Sciatic nerve (tissue), 2 donors: ENCODE measurements at regions of chr20 and their contacts with region 1.

Region 1: GRCh38 chr20:54497926-54498718 is 22.7 kb downstream of the DOK5 start:
- DNase-seq: no peak
- ATAC-seq: no peak

Region 2: DNA sequence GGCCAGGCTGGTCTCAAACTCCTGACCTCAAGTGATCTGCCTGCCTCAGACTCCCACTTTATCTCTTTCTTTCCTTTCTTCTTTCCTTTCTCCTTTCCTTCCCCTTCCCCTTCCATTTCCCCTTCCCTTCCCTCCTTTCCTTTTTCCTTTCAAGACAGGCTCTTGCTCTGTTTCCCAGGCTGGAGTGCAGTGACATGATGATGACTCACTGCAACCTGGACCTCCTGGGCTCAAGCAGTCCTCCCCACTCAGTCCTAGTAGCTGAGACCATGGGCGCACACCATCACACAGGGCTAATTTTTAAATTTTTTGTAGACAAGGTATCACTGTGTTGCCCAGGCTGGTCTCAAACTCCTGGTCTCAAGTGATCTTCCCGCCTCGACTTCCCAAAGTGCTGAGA is 1928.9 kb before region 1 on chr20:
- intact Hi-C with region 1: no loop called
- DNase-seq: no peak
- ATAC-seq: no peak

Region 3: DNA sequence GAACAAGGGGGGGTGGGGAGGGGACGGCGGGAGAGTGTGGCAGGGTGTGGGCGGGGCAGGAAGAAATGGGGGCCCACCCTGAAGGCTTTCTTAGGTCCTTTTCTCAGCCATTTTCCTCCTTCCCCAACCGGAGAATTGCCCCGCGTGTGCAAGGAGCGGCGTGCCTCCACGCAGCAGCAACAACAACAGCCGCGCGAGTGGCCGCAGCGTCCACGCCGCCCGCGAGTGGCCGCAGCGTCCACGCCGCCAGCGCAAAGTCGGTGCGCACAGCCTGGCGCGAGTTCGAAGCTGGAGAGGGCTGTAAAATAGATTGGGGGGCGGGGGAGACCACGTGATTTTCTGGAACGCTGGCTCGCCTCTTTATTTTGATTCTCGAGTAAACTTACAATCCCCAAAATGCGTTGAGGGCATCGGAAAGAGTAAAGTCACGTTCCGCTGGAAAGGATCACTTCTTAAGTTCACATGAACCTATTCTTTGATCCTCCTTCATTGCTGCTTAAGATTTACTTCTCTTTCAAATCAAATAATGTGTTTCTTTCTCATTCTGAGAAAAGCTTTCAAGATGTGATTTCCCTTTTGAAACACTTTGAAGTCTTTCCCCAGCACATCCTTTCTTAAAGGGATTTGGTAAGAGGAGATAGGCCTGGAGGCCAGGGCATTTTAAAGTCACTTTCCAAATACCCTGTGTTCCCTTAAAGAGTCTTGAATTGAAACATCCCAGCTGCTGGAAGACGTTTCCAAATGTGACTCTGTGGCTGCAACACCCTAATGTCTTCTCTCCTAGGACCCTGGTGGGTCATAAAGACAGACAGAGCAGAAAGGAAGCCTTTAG is 837.8 kb before region 1 on chr20:
- intact Hi-C with region 1: no loop called
- DNase-seq: peak; percentile 75
- ATAC-seq: peak; percentile 82

Region 4: DNA sequence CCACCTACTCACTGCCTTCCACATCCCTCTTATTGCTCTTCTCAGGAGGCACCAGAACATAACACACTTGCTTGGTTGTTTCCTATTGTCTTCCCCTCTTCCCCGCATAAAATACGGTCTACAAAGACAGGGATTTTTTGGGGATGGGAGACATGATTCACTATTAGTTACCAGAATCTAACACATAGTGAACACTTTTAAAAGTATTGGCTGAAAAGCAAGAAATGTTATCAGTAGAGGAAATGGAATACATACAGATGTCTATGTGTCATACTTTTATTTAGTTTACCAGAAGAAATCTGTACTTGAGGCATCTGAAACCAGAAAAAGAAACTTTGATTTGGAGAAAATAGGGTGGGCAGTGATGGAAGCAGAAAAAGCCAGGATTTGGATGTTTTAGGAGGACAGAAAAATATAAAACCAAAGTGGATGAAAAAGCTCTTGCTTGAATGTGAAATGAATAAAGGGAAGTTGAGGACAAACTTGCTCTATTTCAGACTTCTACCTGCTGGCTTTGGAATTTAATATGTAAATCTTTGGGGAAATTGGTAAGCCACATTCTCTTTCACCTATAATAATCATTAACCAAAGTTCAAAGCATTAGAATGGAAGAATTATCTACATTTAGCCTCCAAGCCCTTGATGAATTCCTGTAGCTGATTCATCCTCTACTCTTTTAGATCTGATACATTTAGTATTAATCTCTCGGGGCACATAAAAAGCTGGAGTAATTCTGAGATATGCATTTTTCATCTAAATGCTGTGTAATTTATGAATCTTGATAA is 59.9 kb after region 1 on chr20:
- intact Hi-C with region 1: loop called (anchors 2 kb)
- DNase-seq: no peak
- ATAC-seq: no peak

Region 5: DNA sequence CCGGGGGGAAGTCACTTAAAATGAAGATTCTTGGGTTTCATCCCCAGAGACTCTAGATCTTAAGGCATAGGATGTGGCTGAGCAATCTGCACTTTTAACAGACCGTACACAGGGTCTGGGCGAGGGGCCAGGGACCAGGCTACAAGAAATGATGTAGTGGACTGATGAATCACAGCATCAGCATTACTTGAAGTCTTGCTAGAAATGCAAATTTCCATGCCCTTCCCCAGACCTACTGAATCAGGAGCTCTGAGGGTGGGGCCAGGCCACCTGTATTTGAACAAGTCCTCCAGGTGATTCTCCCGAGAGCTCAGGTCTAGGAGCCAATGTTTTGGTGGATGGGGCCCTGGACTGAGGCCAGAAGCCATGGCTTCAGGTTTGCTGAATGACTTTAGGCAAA is 145.7 kb after region 1 on chr20:
- intact Hi-C with region 1: no loop called
- DNase-seq: no peak
- ATAC-seq: no peak